ENCODE measurements at regions of chr19 and their contacts with region 1.

Region 1: DNA sequence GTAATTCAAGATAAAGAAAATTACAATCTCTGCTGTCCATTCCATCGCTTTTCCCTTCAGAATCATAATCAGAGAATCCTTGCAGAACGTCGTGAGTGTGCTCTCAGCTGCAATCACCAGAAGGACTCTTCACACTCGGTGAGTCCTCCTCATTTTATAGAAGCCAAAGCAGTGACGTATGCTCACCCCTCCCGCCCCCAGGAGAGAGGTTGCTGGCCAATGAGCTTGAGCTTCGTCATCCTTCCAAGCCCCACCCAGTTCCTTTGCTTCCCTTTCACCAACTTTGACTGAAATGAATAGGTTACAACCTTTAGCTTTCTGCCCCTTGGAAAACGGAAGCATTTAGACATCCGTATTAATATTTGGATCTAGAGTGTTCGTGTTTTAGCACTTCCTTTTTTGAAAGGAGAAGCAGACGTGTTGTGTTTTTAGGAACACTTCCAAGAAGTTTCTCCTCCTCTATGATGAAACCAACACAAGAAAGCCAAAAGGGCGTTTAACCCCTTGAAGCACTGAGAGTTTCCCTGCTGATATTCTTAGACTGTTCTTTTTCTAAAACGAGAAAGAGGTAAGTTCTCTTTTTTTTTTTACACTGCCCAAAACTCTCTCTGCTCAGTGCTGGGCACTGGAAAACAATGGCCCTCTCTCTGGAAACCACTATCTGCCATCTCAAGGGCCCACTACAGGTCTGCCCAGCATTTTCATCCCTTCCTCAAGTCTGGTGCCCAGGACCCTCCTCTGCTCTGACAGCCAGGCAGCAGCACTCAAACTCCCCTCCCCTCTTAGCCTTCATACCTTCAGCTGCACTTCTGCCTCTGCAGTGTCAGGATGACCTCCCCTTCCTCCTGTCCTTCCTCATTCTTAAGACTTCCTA is 44.3 kb upstream of the CEACAM21 start:
- DNase-seq: peak; percentile 98
- H3K4me3 ChIP-seq: no peak overlapping the region
- H3K27ac ChIP-seq: peak overlapping the region; percentile 85
- H3K4me1 ChIP-seq: peaks cover 31% of the 10 kb centered on the region
- H3K27me3 ChIP-seq: peaks cover 17 to 24% of the 10 kb centered on the region in 2 experiments
- CTCF ChIP-seq: no peak
- POLR2A ChIP-seq: peak; percentile 85

Region 2: DNA sequence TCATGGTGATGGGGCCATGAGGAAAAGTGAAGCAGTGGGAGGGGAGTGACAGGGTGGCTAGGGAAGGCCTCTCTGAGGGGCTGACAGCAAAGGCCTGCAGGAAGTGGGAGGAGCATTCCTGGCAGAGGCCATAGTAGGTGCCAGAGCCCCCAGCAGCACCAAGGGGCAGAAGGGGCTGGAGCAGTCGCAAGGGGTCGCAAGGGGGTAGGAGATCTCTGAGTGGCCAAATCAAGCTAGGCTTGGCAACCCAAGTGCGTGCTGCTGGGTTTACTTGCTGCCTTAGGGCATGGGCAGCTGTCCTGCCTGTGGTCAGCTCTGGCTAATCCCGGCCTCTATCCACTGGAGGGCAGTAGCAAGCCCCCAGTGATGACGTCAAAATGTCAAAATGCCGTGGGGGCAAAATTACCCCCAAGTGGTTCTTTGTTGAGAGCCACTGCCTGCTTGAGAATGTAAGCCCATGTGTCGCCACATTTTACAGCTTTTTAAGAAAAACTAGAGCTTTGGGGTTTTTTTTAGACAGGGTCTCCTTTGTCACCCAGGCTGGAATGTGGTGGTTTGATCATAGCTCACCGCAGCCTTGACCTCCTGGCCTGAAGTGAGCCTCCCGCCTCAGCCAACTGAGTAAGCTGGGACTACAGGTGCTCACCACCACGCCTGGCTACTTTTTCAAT is 209.9 kb before region 1 on chr19:
- CTCF ChIA-PET with region 1: no interaction called
- POLR2A ChIA-PET with region 1: no interaction called
- dilution Hi-C with region 1: no loop called
- intact Hi-C with region 1: loop called (anchors 1 kb)
- DNase-seq: peak; percentile 76
- H3K4me3 ChIP-seq: no peak overlapping the region
- H3K27ac ChIP-seq: peak overlapping the region; percentile 100
- H3K4me1 ChIP-seq: peaks cover 46% of the 10 kb centered on the region
- H3K27me3 ChIP-seq: no peaks in the 10 kb centered on the region
- CTCF ChIP-seq: peak; percentile 83 to 89
- POLR2A ChIP-seq: peak; percentile 38

Region 3: GRCh38 chr19:41479757-41480191 is 51.9 kb before region 1 on chr19:
- CTCF ChIA-PET with region 1: interaction called, 22 read pairs
- POLR2A ChIA-PET with region 1: interaction called, 38 read pairs
- dilution Hi-C with region 1: no loop called
- intact Hi-C with region 1: loop called (anchors 1 kb)
- DNase-seq: peak; percentile 98
- H3K4me3 ChIP-seq: peak overlapping the region in 2 of 3 experiments; percentile 56 to 98
- H3K27ac ChIP-seq: peak overlapping the region; percentile 97
- H3K4me1 ChIP-seq: peaks cover 37% of the 10 kb centered on the region
- H3K27me3 ChIP-seq: peaks cover under 1 to 3% of the 10 kb centered on the region in 2 experiments
- CTCF ChIP-seq: no peak
- POLR2A ChIP-seq: peak; percentile 96

Region 4: GRCh38 chr19:41499899-41500298 is 31.8 kb before region 1 on chr19:
- CTCF ChIA-PET with region 1: no interaction called
- POLR2A ChIA-PET with region 1: no interaction called
- dilution Hi-C with region 1: no loop called
- intact Hi-C with region 1: no loop called
- DNase-seq: no peak
- H3K4me3 ChIP-seq: peak overlapping the region; percentile 5 to 71 (median 35)
- H3K27ac ChIP-seq: peak overlapping the region; percentile 93
- H3K4me1 ChIP-seq: peaks cover 18% of the 10 kb centered on the region
- H3K27me3 ChIP-seq: peaks cover 5 to 7% of the 10 kb centered on the region in 2 experiments
- CTCF ChIP-seq: no peak
- POLR2A ChIP-seq: no peak

Region 5: GRCh38 chr19:41548954-41549688 is 17.4 kb after region 1 on chr19:
- CTCF ChIA-PET with region 1: interaction called, 4 read pairs
- POLR2A ChIA-PET with region 1: interaction called, 7 read pairs
- dilution Hi-C with region 1: no loop called
- intact Hi-C with region 1: loop called (anchors 1 kb)
- DNase-seq: peak; percentile 89
- H3K4me3 ChIP-seq: peak overlapping the region in 2 of 3 experiments; percentile 29 to 66
- H3K27ac ChIP-seq: peak overlapping the region; percentile 92
- H3K4me1 ChIP-seq: peaks cover 38% of the 10 kb centered on the region
- H3K27me3 ChIP-seq: no peaks in the 10 kb centered on the region
- CTCF ChIP-seq: no peak
- POLR2A ChIP-seq: peak; percentile 86